Activated CD4-positive, alpha-beta T cell treated with anti-CD3 and anti-CD28 coated beads, Interleukin-2, amount 10 ng/mL, durations not matched to agents 7 days and 5 days (primary cell): ENCODE measurements at regions of chr2 and their contacts with region 1.

Region 1: GRCh38 chr2:68689553-68690537 is 44.8 kb upstream of the ARHGAP25 start:
- DNase-seq: peak; percentile 9
- H3K4me3 Mint-ChIP-seq: no peak overlapping the region
- H3K27ac Mint-ChIP-seq: peak overlapping the region; percentile 11
- H3K4me1 Mint-ChIP-seq: peaks cover 22% of the 10 kb centered on the region
- H3K27me3 Mint-ChIP-seq: peaks cover 2% of the 10 kb centered on the region

Region 2: GRCh38 chr2:68700560-68700959 is 10.7 kb after region 1 on chr2:
- CTCF ChIA-PET with region 1: interaction called, 12 read pairs
- POLR2A ChIA-PET with region 1: no interaction called
- DNase-seq: no peak
- H3K4me3 Mint-ChIP-seq: no peak overlapping the region
- H3K27ac Mint-ChIP-seq: no peak overlapping the region
- H3K4me1 Mint-ChIP-seq: peaks cover 10% of the 10 kb centered on the region
- H3K27me3 Mint-ChIP-seq: no peaks in the 10 kb centered on the region

Region 3: DNA sequence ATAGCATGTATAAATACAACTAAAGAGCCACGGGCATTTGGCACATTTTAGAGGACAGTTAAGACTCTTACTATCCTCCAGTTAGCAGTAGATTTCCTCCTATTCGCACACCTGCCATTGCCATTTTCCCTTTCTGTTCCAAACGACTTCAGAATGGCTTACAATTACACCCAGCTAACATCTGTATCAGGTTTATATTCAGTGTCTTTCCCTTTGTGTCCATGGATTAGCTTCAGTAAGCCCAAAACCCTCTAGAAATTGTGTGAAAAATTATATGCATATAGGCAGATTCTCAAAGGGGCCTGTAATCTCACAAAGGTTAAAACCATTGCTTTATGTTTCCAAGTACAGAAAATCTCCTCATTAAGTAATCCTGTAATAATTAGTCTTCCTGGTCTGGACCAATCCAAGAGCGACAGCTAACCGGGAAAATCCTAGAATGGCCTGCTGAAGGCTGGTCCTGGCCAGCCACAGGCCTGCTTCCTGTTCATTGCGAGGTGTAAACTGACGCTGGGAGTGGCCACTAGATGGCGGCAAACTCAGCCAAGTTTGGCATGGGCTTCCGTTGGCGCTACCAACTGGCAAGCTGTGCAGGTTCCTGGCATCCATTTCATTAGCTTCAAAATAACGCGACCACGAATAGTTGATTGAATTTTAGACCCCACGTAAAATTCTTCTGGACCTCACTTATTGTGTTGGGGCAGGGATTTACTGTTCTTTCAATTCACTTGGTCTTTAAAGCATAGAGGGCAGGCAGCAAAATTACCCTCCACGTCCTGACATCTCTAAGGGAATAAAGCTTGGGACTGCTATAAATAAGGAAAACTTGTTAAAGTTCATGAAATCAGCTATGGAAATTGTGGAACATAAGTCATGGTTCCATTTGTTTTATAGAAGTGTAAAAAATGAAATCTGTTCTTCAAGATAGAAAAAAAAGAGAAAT is 61.8 kb after region 1 on chr2:
- CTCF ChIA-PET with region 1: no interaction called
- POLR2A ChIA-PET with region 1: no interaction called
- DNase-seq: peak; percentile 93
- H3K4me3 Mint-ChIP-seq: peak overlapping the region; percentile 15
- H3K27ac Mint-ChIP-seq: peak overlapping the region; percentile 72
- H3K4me1 Mint-ChIP-seq: peaks cover 88% of the 10 kb centered on the region
- H3K27me3 Mint-ChIP-seq: no peaks in the 10 kb centered on the region